ENCODE measurements at regions of chr9 and their contacts with region 1.

Region 1: DNA sequence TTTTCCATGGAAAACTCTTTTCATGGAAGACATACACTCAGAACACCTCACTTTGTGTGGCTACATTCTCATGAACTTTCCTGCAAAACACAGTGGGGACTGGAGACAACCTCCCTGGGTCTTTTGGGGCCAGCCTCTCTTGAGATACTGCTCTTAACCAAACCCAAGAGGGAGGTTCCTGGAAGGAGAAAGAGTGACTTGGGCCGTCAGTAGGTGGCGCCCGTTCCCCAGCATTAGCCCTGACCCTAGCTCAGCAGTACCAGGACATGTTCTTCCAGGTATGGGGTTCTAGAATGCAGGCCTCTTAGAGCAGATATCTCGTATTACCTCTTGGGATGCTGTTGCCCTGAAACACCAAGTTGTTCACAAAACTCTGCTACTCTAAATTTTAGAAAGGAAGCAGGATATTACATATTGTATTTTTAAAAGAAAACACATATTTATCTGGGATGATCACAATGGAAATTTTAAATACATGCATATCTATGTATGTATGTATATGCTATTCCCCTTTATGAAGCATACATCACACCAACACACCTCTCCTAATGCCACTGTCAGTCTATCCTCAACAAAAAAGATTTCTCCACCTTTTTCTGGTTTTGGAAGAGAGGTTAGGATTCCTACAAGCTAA is 15.8 kb upstream of the GLIS3 start:
- DNase-seq: peak; percentile 89
- ATAC-seq: peak; percentile 90

Region 2: DNA sequence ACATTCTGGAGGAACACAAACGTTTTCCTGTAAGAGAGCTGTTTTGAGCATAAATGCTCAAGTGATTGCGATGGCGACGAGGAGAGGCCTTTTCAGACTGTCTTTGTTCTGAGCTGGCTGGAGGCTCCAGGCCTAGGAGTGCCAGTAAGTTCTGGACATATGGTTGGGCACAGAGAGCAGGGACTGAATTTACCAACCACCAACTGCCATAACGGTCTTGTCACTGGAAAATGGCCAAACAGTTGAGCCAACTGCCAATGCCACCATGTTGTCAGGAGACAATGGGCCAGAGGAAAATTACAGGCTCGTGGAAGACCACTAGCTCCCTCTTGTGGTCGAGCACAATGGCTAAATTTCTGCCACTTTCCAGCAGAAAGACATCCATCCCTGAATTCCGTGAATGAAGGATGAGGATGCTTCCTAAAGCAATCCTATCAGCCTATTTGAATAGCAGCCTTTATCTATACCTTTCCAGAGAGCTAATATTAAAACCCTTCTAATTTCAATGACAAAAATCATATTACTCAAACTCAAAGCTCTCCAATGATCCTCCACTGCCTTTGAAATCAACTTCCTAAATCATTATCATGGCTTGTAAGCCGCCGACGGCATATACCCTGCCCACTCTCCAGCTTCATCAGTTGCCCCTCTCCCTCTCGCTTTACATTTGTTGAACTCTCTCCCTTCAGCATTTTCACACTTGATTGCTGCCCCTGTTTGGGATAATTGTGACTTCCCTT is 51.1 kb after region 1 on chr9:
- intact Hi-C with region 1: loop called (anchors 10 kb)
- DNase-seq: peak; percentile 59
- ATAC-seq: no peak